Activated B cell treated with CpG ODN at 0.5 μM for 24 hours (primary cell): ENCODE measurements at regions of chr1 and their contacts with region 1.

Region 1: GRCh38 chr1:206674745-206675175 is 9.9 kb upstream of the MAPKAPK2 start:
- DNase-seq: no peak
- ATAC-seq: no peak
- H3K4me3 Mint-ChIP-seq: no peak overlapping the region
- H3K27ac Mint-ChIP-seq: peak overlapping the region; percentile 73
- H3K4me1 Mint-ChIP-seq: peaks cover 24% of the 10 kb centered on the region
- H3K27me3 Mint-ChIP-seq: peaks cover 5% of the 10 kb centered on the region
- CTCF ChIP-seq: no peak

Region 2: GRCh38 chr1:206753141-206753540 is 78.4 kb after region 1 on chr1:
- CTCF ChIA-PET with region 1: no interaction called
- POLR2A ChIA-PET with region 1: interaction called, 10 read pairs
- intact Hi-C with region 1: no loop called
- DNase-seq: no peak
- ATAC-seq: no peak
- H3K4me3 Mint-ChIP-seq: no peak overlapping the region
- H3K27ac Mint-ChIP-seq: no peak overlapping the region
- H3K4me1 Mint-ChIP-seq: peaks cover 6% of the 10 kb centered on the region
- H3K27me3 Mint-ChIP-seq: no peaks in the 10 kb centered on the region
- CTCF ChIP-seq: no peak